ENCODE measurements at regions of chr10 and their contacts with region 1.

Region 1: GRCh38 chr10:70815504-70816219 is at the start of gene SGPL1:
- DNase-seq: peak; percentile 79
- H3K4me3 Mint-ChIP-seq: peak within 1 kb of the TSS; percentile 93
- H3K27ac Mint-ChIP-seq: peak within 1 kb of the TSS; percentile 75
- H3K4me1 Mint-ChIP-seq: peaks cover 10% of the 10 kb centered on the region
- H3K27me3 Mint-ChIP-seq: no peaks in the 10 kb centered on the region
- CTCF ChIP-seq: peak; percentile 96
- total RNA-seq, gene SGPL1: 81.5 and 93.8 TPM in 2 replicates

Region 2: GRCh38 chr10:69783515-69783914 is 1032.1 kb before region 1 on chr10:
- CTCF ChIA-PET with region 1: no interaction called
- POLR2A ChIA-PET with region 1: no interaction called
- intact Hi-C with region 1: no loop called
- DNase-seq: no peak
- H3K4me3 Mint-ChIP-seq: no peak overlapping the region
- H3K27ac Mint-ChIP-seq: no peak overlapping the region
- H3K4me1 Mint-ChIP-seq: no peaks in the 10 kb centered on the region
- H3K27me3 Mint-ChIP-seq: peaks cover 12% of the 10 kb centered on the region
- CTCF ChIP-seq: no peak

Region 3: GRCh38 chr10:70803775-70804420 is 11.8 kb before region 1 on chr10:
- CTCF ChIA-PET with region 1: no interaction called
- POLR2A ChIA-PET with region 1: interaction called, 25 read pairs
- intact Hi-C with region 1: no loop called
- DNase-seq: peak; percentile 90
- H3K4me3 Mint-ChIP-seq: no peak overlapping the region
- H3K27ac Mint-ChIP-seq: peak overlapping the region; percentile 86
- H3K4me1 Mint-ChIP-seq: peaks cover 19% of the 10 kb centered on the region
- H3K27me3 Mint-ChIP-seq: no peaks in the 10 kb centered on the region
- CTCF ChIP-seq: no peak

Region 4: GRCh38 chr10:70832852-70833528 is 17.3 kb after region 1 on chr10:
- CTCF ChIA-PET with region 1: no interaction called
- POLR2A ChIA-PET with region 1: interaction called, 15 read pairs
- intact Hi-C with region 1: no loop called
- DNase-seq: peak; percentile 46
- H3K4me3 Mint-ChIP-seq: no peak overlapping the region
- H3K27ac Mint-ChIP-seq: no peak overlapping the region
- H3K4me1 Mint-ChIP-seq: peaks cover 21% of the 10 kb centered on the region
- H3K27me3 Mint-ChIP-seq: no peaks in the 10 kb centered on the region
- CTCF ChIP-seq: no peak

Region 5: DNA sequence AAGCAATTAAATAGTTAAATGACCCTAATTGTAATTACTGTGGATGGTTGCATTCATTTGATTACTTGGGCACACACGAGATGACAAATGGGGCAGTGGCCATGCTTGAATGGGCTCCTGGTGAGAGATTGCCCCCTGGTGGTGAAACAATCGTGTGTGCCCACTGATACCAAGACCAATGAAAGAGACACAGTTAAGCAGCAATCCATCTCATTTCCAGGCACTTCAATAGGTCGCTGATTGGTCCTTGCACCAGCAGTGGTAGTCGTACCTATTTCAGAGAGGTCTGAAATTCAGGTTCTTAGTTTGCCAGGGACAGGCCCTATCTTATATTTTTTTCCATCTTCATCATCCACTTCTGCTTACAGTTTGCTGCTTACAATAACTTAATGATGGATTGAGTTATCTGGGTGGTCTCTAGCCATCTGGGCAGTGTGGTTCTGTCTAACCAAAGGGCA is 64.4 kb after region 1 on chr10:
- CTCF ChIA-PET with region 1: interaction called, 6 read pairs
- POLR2A ChIA-PET with region 1: interaction called, 16 read pairs
- intact Hi-C with region 1: loop called (anchors 1 kb)
- DNase-seq: peak; percentile 82
- H3K4me3 Mint-ChIP-seq: no peak overlapping the region
- H3K27ac Mint-ChIP-seq: no peak overlapping the region
- H3K4me1 Mint-ChIP-seq: no peaks in the 10 kb centered on the region
- H3K27me3 Mint-ChIP-seq: no peaks in the 10 kb centered on the region
- CTCF ChIP-seq: peak; percentile 77

Measured in MCF 10A (cell line).